Astrocyte of the cerebellum (primary cell): ENCODE measurements at regions of chr22 and their contacts with region 1.

Region 1: DNA sequence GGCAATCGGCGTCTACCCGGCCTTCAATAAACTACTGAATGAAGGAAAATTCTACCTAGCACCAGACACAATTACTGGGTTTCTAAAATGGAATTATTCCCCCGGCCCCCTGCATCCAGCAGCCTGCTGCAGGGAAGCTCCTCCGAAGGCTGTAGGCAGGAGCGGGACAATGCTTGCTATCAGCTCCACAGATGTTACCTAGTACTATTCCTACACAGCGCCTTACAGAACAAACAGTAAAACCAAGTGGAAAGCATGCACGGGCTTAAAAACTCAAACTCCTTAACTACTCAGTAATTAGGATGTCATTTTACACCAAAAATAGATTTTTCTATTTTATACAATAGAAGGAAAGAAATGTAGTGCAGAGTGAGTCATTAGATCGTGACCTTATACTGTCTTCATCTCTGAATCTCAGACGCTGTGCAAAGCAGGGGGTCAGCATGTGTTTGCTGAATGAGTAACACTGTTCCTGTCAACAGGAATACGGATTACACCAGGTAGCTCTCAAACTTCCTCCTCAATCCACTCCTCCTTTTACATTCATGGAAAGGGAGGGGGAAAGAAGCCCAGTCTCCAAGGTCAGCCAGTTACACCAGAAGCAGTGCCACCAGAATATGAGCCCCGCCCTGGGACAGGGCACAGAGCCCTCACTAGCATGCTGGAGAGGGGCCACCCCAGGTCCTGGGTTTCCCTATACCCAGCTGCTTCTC is 74.9 kb downstream of the PACSIN2 start:
- DNase-seq: peak; percentile 62
- H3K4me3 ChIP-seq: no peak overlapping the region
- CTCF ChIP-seq: no peak

Region 2: GRCh38 chr22:42880815-42881214 is 59.3 kb before region 1 on chr22:
- in situ Hi-C with region 1: loop called (anchors 5 kb)
- DNase-seq: no peak
- H3K4me3 ChIP-seq: no peak overlapping the region
- CTCF ChIP-seq: peak; percentile 11